PC-9 (cell line): ENCODE measurements at regions of chr4 and their contacts with region 1.

Region 1: GRCh38 chr4:38154681-38155608 is 194.7 kb downstream of the PTTG2 start:
- DNase-seq: peak; percentile 46 to 49
- H3K4me3 ChIP-seq: no peak overlapping the region
- H3K27ac ChIP-seq: no peak overlapping the region
- H3K4me1 ChIP-seq: peaks cover 48% of the 10 kb centered on the region
- H3K27me3 ChIP-seq: no peaks in the 10 kb centered on the region
- CTCF ChIP-seq: no peak

Region 2: GRCh38 chr4:38842994-38843393 is 688.0 kb after region 1 on chr4:
- CTCF ChIA-PET with region 1: no interaction called
- POLR2A ChIA-PET with region 1: interaction called, 10 read pairs
- intact Hi-C with region 1: no loop called
- DNase-seq: no peak
- H3K4me3 ChIP-seq: no peak overlapping the region
- H3K27ac ChIP-seq: no peak overlapping the region
- H3K4me1 ChIP-seq: peaks cover 4% of the 10 kb centered on the region
- H3K27me3 ChIP-seq: no peaks in the 10 kb centered on the region
- CTCF ChIP-seq: no peak